Activated CD8-positive, alpha-beta memory T cell treated with anti-CD3 and anti-CD28 coated beads, Interleukin-2, amount 10 ng/mL, durations not matched to agents 7 days and 5 days (primary cell): ENCODE measurements at regions of chr17 and their contacts with region 1.

Region 1: GRCh38 chr17:28552246-28552999 is at the start of gene UNC119:
- DNase-seq: peak; percentile 84
- ATAC-seq: peak; percentile 88
- H3K4me3 Mint-ChIP-seq: peak within 1 kb of the TSS; percentile 78
- H3K27ac Mint-ChIP-seq: peak within 1 kb of the TSS; percentile 71
- H3K4me1 Mint-ChIP-seq: peaks cover 43% of the 10 kb centered on the region
- H3K27me3 Mint-ChIP-seq: no peaks in the 10 kb centered on the region
- total RNA-seq, gene UNC119: 41.2 to 59.0 TPM

Region 2: DNA sequence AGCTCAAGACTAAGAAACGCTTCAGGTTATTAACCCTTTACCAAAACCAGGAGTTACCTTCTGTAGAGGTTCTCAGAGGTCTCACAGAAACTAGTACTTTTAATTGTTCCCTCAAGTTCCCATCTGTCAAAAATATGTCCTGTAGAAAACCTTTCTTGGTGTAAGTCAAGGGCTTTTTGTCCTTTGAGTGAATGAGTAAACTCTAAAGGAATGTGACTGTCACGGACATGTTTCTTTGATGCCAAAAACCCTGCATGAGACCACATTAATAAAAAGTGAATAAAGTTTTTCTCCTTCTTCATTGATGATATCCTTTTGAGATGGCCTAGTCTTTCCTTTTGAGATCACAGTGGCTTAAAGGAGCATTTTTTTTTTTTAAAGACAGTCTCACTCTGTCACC is 407.1 kb before region 1 on chr17:
- CTCF ChIA-PET with region 1: no interaction called
- DNase-seq: no peak
- ATAC-seq: no peak
- H3K4me3 Mint-ChIP-seq: no peak overlapping the region
- H3K27ac Mint-ChIP-seq: no peak overlapping the region
- H3K4me1 Mint-ChIP-seq: no peaks in the 10 kb centered on the region
- H3K27me3 Mint-ChIP-seq: no peaks in the 10 kb centered on the region

Region 3: GRCh38 chr17:28477928-28478327 is 74.5 kb before region 1 on chr17:
- CTCF ChIA-PET with region 1: no interaction called
- DNase-seq: no peak
- ATAC-seq: no peak
- H3K4me3 Mint-ChIP-seq: no peak overlapping the region
- H3K27ac Mint-ChIP-seq: no peak overlapping the region
- H3K4me1 Mint-ChIP-seq: peaks cover 8% of the 10 kb centered on the region
- H3K27me3 Mint-ChIP-seq: no peaks in the 10 kb centered on the region

Region 4: DNA sequence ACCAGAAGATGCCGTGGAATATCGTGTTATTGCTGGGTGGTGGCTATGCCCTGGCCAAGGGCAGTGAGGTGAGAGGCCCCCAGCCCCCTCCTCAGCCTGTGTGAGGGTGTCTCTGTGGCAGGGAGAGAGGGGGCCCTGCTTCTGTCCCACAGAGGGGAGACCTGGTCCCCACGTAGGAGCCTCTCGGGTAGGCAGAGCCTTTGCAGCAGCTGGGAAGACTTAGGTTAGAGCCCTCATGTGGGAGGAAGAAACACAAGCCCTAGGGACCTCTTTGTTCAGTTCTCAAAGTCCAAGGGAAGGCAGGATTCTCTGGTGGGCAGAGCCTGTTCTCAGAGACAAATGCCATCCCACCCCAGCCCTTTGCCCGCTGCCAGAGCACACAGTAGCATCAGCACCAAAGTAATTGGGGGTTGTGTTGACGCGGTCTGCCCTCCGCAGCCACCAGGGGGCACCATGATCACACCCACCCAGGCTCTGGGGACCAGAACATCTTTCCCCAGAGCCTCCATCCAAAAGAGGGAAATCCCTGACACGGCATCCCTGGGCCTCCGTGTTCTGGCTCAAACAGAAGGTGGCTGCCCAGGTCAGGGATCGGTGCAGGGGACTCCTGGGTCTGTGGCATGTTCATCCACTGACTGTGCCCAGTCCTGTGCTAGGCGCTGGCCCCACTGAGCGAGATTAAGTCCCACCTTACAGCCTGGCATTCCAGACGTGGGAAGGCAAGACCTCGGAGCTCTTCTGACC is 57.8 kb before region 1 on chr17:
- CTCF ChIA-PET with region 1: interaction called, 13 read pairs
- DNase-seq: peak; percentile 79
- ATAC-seq: peak; percentile 93
- H3K4me3 Mint-ChIP-seq: no peak overlapping the region
- H3K27ac Mint-ChIP-seq: no peak overlapping the region
- H3K4me1 Mint-ChIP-seq: no peaks in the 10 kb centered on the region
- H3K27me3 Mint-ChIP-seq: peaks cover 7% of the 10 kb centered on the region

Region 5: DNA sequence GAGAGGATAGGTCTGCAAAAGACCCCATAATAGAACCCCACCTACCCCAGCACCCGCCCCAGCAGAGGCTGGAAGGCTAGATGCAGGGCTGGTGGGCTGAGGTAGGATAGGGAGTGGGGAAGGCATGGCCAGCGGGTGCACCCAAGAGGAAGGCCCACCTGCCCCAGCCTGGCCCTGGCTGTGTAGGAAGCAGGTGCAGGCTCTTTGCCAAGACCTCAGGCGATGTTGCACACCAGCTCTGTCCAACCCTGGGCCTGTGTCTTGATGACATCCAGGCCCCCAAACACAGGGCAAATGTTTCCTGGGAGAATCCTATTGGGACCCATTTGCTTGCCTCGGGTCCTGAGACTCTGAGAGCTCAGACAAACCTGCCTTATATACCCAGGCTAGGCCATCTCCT is 12.2 kb before region 1 on chr17:
- CTCF ChIA-PET with region 1: interaction called, 19 read pairs
- DNase-seq: no peak
- ATAC-seq: no peak
- H3K4me3 Mint-ChIP-seq: no peak overlapping the region
- H3K27ac Mint-ChIP-seq: no peak overlapping the region
- H3K4me1 Mint-ChIP-seq: no peaks in the 10 kb centered on the region
- H3K27me3 Mint-ChIP-seq: no peaks in the 10 kb centered on the region

Region 6: GRCh38 chr17:28571255-28572122 is 19.1 kb after region 1 on chr17 and contains the start of gene PIGS:
- CTCF ChIA-PET with region 1: interaction called, 28 read pairs
- DNase-seq: peak; percentile 96
- ATAC-seq: peak; percentile 98
- H3K4me3 Mint-ChIP-seq: peak within 1 kb of the TSS; percentile 86
- H3K27ac Mint-ChIP-seq: peak within 1 kb of the TSS; percentile 94
- H3K4me1 Mint-ChIP-seq: peaks cover 51% of the 10 kb centered on the region
- H3K27me3 Mint-ChIP-seq: no peaks in the 10 kb centered on the region
- total RNA-seq, gene PIGS: 61.0 to 66.2 TPM

Region 7: GRCh38 chr17:28576758-28577465 is 24.5 kb after region 1 on chr17 and contains the start of gene ALDOC:
- CTCF ChIA-PET with region 1: interaction called, 28 read pairs
- DNase-seq: peak; percentile 98
- ATAC-seq: peak; percentile 92
- H3K4me3 Mint-ChIP-seq: peak within 1 kb of the TSS; percentile 81
- H3K27ac Mint-ChIP-seq: peak within 1 kb of the TSS; percentile 83
- H3K4me1 Mint-ChIP-seq: peaks cover 59% of the 10 kb centered on the region
- H3K27me3 Mint-ChIP-seq: no peaks in the 10 kb centered on the region
- total RNA-seq, gene ALDOC: 36.9 to 52.0 TPM